ENCODE measurements at regions of chr2 and their contacts with region 1.

Region 1: DNA sequence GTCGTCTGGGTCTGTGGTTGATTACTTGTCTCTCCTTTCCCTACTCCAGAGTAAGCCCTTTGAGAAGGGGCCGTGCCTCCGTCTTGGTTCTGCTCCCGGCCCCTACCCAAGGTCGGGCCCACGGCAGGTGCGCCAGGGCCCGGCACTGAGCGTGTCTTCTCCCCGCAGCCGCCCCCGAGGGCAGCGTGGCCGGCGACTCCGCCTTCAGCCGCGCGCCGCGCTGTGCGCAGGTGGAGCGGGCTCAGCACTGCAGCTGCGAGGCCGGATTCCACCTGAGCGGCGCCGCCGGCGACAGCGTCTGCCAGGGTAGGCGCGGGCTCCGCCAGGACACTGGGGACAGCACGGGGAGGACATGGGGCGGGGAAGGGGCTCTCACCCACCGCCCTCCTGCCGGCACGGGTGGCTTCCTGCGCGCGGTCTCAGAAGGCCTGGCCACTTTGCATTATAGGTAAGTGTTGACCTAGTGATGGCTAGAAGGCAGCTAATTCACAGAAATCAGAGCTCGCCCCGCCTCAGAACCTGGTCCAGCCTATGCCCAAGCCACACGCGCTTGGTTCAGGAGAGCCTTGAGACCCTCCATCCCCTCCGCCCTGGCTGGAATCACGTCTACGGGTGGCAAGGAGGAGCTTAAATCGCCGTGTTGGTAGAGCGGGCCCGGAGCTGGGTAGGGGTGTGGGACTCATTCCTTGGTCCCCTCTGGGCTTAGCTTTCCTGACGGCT is 43.5 kb downstream of the FBLN7 start:
- DNase-seq: peak; percentile 73
- H3K4me3 Mint-ChIP-seq: peak overlapping the region; percentile 91
- H3K27ac Mint-ChIP-seq: peak overlapping the region; percentile 99
- H3K4me1 Mint-ChIP-seq: peaks cover 70% of the 10 kb centered on the region
- H3K27me3 Mint-ChIP-seq: no peaks in the 10 kb centered on the region

Region 2: DNA sequence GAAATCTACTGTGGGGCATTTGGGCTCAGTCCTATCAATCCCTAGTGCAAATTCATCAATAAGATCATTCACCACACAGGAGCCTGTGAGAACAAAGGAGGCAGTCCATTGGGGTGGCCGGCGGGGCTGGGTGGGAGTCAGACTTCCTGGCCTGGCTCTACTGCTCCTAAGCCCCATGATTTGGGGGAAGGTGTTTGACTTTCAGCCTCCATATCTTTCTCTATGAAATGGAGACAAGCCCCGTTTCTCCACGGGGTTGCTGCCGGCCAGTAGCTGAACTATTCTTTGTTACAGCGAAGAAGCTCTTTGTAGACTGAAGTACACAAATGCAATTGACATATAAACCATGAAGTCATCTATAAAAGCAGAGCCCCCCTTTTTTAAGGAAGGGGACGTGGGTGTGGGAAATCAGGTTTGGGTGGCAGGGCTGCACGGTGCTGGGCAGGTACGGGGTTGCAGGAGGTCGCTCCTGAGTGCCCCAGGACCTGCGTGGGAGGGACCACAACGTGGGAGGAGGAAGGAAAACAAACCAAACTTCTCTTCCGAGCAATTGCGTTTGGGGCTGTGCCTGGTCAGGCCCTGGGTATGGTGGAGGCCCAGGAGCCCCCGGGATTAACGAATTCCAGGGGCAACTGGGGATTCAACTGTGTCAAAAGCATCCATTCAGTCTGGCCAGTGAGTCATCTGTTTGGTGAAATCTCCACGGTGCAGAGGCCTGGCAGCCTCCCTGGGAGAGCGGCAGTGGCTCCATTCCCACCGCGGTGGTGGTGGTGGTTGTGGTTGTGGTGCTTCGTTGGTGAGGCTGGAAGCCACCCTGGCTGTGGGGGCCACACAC is 25.4 kb before region 1 on chr2:
- CTCF ChIA-PET with region 1: interaction called, 5 read pairs
- intact Hi-C with region 1: loop called (anchors 1 kb)
- DNase-seq: peak; percentile 64
- H3K4me3 Mint-ChIP-seq: peak overlapping the region; percentile 43
- H3K27ac Mint-ChIP-seq: peak overlapping the region; percentile 74
- H3K4me1 Mint-ChIP-seq: peaks cover 51% of the 10 kb centered on the region
- H3K27me3 Mint-ChIP-seq: no peaks in the 10 kb centered on the region

Region 3: GRCh38 chr2:112198780-112199179 is 17.0 kb after region 1 on chr2:
- CTCF ChIA-PET with region 1: no interaction called
- intact Hi-C with region 1: loop called (anchors 2 kb)
- DNase-seq: no peak
- H3K4me3 Mint-ChIP-seq: no peak overlapping the region
- H3K27ac Mint-ChIP-seq: no peak overlapping the region
- H3K4me1 Mint-ChIP-seq: peaks cover 32% of the 10 kb centered on the region
- H3K27me3 Mint-ChIP-seq: no peaks in the 10 kb centered on the region

Measured in activated naive CD4-positive, alpha-beta T cell treated with anti-CD3 and anti-CD28 coated beads for 36 hours (primary cell).